Right cardiac atrium (tissue), 5 donors: ENCODE measurements at regions of chr9 and their contacts with region 1.

Region 1: GRCh38 chr9:12884737-12885414 is 110.1 kb downstream of the LURAP1L start:
- DNase-seq: no peak
- ATAC-seq: peak; percentile 59 to 81
- H3K4me3 ChIP-seq: no peak overlapping the region
- H3K27ac ChIP-seq: no peak overlapping the region
- H3K4me1 ChIP-seq: no peaks in the 10 kb centered on the region
- H3K27me3 ChIP-seq: no peaks in the 10 kb centered on the region

Region 2: GRCh38 chr9:12723409-12724028 is 161.4 kb before region 1 on chr9:
- intact Hi-C with region 1: loop called (anchors 5 to 10 kb)
- DNase-seq: no peak
- ATAC-seq: no peak
- H3K4me3 ChIP-seq: no peak overlapping the region
- H3K27ac ChIP-seq: no peak overlapping the region
- H3K4me1 ChIP-seq: no peaks in the 10 kb centered on the region
- H3K27me3 ChIP-seq: no peaks in the 10 kb centered on the region

Region 3: DNA sequence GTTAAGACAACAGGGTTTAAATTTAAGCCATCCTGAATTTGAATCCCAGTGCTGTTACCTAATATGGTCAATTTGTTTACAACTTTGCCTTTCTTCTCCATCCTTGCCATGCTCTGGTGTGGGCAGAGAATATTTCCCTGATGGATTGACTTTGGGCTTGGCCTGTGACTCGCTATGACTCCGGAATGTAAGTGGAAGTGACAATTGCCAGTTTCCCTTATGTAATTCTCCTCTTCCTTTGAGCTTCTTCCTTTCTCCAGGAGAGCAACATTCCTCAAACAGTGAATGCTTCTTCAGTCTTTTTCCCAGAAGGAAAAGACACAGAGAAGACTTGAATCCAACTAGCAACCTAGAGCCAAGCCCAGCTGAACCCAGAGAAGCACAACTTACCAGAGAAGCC is 49.1 kb after region 1 on chr9:
- intact Hi-C with region 1: loop called in 1 of 4 experiments (anchors 10 kb)
- DNase-seq: no peak
- ATAC-seq: no peak
- H3K4me3 ChIP-seq: no peak overlapping the region
- H3K27ac ChIP-seq: no peak overlapping the region
- H3K4me1 ChIP-seq: no peaks in the 10 kb centered on the region
- H3K27me3 ChIP-seq: no peaks in the 10 kb centered on the region